AG04449 (cell line): ENCODE measurements at regions of chr12 and their contacts with region 1.

Region 1: GRCh38 chr12:124720004-124720680 is 143.5 kb downstream of the SCARB1 start:
- DNase-seq: no peak
- H3K4me3 ChIP-seq: no peak overlapping the region
- CTCF ChIP-seq: peak; percentile 9

Region 2: DNA sequence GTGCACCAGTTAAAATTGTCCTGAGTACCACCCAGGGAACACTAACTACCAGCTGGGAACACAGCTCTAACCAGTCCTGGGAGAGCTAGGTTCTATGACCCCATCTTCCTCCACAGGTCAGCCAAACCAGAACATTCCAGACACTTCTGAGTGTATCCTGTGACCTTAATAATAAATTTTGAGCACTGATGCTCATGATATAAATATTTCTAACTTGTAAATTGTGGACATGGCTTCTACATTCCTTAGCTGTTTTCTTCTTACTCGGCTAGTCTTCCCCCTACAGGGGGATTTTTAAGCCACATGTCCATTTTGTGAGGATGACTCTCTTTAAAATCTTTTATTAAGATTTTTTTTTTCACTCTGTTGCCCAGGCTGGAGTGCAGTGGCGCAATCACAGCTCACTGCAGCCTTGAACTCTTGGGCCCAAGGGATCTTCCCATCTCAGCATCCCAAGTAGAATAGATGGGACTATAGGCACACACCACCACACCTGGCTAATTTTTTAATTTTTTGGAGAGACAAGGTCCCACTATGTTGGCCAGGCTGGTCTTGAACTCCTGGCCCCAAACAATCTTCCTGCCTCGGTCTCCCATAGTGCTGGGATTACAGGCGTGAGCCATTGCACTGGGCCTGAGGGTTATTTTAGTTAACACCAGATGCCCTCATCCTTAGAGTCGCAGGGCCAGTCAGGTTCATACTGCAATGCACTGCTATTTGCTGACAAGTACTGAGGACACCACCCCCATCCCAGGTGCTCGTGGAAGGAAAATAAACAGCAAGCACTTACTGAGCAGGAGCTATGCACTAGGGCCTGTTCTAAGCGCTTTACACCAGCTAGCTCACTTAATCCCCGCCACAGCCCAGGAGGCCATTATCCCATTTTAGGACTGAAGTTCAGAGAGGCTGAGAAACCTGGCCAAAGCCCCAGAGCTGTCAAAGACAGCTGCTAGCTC is 10.1 kb before region 1 on chr12:
- CTCF ChIA-PET with region 1: interaction called, 15 read pairs
- POLR2A ChIA-PET with region 1: no interaction called
- DNase-seq: no peak
- H3K4me3 ChIP-seq: no peak overlapping the region
- CTCF ChIP-seq: no peak